ENCODE measurements at regions of chr4 and their contacts with region 1.

Region 1: GRCh38 chr4:126976850-126977632 is 655.7 kb upstream of the INTU start:
- DNase-seq: no peak

Region 2: DNA sequence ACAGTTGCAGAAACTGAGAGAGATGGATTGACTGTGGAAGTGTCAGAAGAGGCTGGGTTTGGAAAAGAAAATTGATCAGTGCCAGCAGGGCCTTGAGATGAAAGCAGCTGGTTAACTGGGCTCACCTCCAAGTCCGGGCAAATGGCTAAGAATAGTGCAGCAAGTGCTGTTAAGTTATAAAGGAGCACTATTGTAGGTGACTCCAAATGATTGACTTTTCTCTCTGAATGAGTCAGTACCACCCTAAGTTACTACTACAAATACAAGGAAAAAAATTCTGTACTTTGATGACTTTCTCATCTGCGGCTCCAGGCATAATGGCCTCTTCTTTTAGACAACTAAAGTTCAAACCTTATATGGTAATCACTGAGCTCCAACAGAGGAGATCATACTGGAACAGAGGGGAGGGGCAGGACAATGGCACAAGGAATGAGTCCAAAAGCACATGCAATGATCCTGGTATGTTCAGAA is 77.7 kb before region 1 on chr4:
- intact Hi-C with region 1: no loop called
- DNase-seq: no peak

Region 3: DNA sequence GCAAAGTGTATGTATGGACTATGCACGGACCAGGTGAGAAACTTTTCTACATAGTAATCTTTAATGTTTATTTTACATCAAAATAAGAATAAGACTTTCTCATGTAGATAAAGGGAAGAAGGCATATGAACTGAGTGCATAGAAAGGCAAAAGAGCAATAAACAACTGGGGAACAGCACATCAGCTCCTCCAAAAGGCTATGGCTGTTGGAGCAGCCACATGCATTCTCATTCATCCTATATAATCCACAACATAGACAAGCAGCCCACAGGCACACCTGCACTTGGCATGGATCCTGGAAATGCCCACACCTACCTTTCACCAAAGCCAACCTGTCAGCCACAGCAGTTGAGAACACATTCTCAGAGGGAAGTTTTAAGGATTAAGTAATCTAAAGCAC is 68.8 kb after region 1 on chr4:
- intact Hi-C with region 1: loop called in 1 of 2 experiments (anchors 2 kb)
- DNase-seq: no peak

Region 4: GRCh38 chr4:127097061-127097460 is 120.0 kb after region 1 on chr4:
- intact Hi-C with region 1: no loop called
- DNase-seq: no peak

Region 5: DNA sequence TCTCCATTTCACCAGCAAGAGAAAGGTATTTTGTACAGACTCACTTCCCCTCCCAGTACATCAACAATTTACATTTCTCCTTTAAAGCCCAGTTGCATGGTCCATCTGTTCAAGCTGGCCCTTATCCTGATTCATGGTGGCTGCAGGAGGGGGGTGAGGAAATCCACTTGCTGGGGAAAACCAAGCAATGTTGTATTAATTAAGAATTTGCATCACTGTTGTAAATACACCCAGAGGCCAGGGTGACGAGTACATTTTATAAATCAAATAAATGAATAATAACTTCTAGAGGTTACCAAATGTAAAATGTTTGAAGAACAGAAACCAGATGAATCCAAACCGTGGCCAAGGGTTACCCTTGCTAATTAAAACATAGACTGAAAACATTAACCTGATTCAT is 259.8 kb after region 1 on chr4:
- intact Hi-C with region 1: no loop called
- DNase-seq: no peak

Measured in posterior vena cava (tissue), 2 donors.